ENCODE measurements at regions of chr7 and their contacts with region 1.

Region 1: DNA sequence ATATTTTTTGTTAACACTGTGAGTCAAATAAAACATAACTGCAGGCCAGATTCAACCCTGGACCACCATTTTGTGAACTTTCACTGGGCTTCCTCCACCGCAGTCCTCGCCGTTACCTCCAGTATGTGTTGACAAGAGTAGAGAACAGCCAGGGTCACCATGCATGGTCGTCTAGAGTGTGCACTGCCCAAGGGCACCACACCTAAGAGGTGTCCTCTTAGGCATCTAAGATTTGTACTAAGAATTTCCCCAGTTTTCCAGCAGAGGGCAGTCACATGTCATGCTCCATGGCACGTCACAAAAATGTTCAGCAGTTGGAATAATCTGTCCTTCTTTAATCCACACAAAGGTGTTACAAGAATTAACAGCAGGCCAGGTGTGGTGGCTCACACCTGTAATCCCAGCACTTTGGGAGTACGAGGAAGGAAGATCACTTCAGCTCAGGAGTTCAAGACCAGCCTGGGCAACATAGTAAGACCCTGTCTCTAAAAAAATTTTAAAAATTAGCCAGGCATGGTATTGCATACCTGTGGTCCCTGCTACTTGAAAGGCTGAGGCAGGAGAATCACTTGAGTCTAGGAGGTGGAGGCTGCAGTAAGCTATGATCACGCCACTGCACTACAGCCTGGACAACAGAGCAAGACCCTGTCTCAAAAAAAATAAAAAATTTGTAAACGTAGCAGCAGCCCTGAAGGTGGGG is 71.2 kb upstream of the FOXK1 start:
- DNase-seq: peak; percentile 58
- H3K4me3 ChIP-seq: no peak overlapping the region
- H3K27ac ChIP-seq: no peak overlapping the region
- H3K4me1 ChIP-seq: peaks cover 6% of the 10 kb centered on the region
- H3K27me3 ChIP-seq: no peaks in the 10 kb centered on the region
- CTCF ChIP-seq: peak; percentile 68 to 84 (median 76)
- POLR2A ChIP-seq: no peak

Region 2: GRCh38 chr7:4479367-4480039 is 131.4 kb before region 1 on chr7:
- intact Hi-C with region 1: no loop called
- DNase-seq: peak; percentile 50
- H3K4me3 ChIP-seq: no peak overlapping the region
- H3K27ac ChIP-seq: no peak overlapping the region
- H3K4me1 ChIP-seq: no peaks in the 10 kb centered on the region
- H3K27me3 ChIP-seq: no peaks in the 10 kb centered on the region
- CTCF ChIP-seq: peak in 2 of 3 experiments; percentile 30 to 31
- POLR2A ChIP-seq: no peak

Region 3: DNA sequence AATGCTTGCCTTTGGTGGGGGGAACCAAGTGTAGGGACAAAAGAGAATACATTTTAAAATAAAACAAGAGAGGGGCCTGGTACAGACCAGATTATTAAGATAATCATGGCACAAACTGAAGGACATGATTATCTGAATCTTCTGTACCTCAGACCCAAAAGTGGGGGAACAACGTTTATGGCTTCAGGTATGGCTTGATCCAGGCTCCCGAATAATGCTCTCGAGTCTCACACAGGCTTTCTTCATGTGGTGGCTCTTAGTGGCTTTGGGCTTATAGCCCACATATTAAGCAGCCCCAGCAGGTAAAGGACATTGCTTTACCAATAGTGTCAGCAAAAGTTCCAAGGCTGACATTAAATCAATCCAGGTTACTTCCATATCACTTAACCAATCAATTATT is 35.7 kb before region 1 on chr7:
- intact Hi-C with region 1: no loop called
- DNase-seq: no peak
- H3K4me3 ChIP-seq: no peak overlapping the region
- H3K27ac ChIP-seq: no peak overlapping the region
- H3K4me1 ChIP-seq: no peaks in the 10 kb centered on the region
- H3K27me3 ChIP-seq: no peaks in the 10 kb centered on the region
- CTCF ChIP-seq: no peak
- POLR2A ChIP-seq: no peak

Region 4: GRCh38 chr7:4753711-4754432 is 143.0 kb after region 1 on chr7:
- intact Hi-C with region 1: loop called (anchors 10 kb)
- DNase-seq: peak; percentile 84
- H3K4me3 ChIP-seq: no peak overlapping the region
- H3K27ac ChIP-seq: no peak overlapping the region
- H3K4me1 ChIP-seq: peaks cover 4% of the 10 kb centered on the region
- H3K27me3 ChIP-seq: no peaks in the 10 kb centered on the region
- CTCF ChIP-seq: peak; percentile 83 to 95 (median 86)
- POLR2A ChIP-seq: no peak